Heart right ventricle (tissue), 16 donors: ENCODE measurements at regions of chr1 and their contacts with region 1.

Region 1: DNA sequence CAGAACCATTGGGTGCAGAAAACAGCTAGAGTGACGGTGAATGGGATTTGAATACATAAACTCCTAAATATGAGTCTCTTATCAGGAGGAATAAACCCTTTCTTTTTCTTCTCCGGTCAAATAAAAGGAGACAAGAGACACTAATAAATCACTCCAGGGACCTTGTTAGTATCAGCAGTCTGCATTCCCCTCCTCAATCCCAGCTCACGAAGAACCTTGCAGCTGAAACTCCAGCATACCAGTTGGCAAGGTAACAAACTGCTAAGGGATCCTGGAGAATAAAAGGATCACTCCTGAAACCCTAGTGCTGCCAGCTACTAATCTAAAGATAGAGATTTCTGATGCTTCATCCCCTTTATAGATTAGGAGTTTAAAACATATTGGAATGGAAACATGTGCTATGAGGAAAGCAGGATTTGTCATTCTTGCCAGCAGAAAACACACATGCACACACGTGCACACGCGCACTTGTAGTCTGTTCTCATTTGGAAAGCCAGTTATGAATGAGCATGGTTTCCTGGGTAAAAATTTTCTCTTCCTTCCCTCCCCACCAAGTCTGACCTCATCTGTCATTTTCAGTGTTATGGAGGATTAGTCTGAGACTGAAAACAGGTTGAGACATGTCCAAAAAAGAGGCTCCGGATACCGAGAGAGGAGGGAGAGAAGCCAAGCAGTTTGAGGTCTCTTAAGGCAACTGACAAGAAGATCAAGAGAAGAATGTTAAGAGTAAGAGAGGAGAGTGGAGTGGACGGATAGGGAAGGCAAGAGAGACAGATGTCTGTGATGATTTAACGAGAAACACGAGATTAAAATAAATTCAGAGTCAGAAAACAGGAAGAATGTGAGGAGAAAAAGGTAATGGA is 10.9 kb downstream of the IER5 start:
- DNase-seq: no peak
- ATAC-seq: no peak
- H3K4me3 ChIP-seq: no peak overlapping the region
- H3K27ac ChIP-seq: peak overlapping the region in 3 of 10 donors; percentile 10 to 31 (median 31)
- H3K4me1 ChIP-seq: peaks cover 3 to 89% (median 65%) of the 10 kb centered on the region in 9 donors
- H3K27me3 ChIP-seq: no peaks in the 10 kb centered on the region
- CTCF ChIP-seq: no peak

Region 2: DNA sequence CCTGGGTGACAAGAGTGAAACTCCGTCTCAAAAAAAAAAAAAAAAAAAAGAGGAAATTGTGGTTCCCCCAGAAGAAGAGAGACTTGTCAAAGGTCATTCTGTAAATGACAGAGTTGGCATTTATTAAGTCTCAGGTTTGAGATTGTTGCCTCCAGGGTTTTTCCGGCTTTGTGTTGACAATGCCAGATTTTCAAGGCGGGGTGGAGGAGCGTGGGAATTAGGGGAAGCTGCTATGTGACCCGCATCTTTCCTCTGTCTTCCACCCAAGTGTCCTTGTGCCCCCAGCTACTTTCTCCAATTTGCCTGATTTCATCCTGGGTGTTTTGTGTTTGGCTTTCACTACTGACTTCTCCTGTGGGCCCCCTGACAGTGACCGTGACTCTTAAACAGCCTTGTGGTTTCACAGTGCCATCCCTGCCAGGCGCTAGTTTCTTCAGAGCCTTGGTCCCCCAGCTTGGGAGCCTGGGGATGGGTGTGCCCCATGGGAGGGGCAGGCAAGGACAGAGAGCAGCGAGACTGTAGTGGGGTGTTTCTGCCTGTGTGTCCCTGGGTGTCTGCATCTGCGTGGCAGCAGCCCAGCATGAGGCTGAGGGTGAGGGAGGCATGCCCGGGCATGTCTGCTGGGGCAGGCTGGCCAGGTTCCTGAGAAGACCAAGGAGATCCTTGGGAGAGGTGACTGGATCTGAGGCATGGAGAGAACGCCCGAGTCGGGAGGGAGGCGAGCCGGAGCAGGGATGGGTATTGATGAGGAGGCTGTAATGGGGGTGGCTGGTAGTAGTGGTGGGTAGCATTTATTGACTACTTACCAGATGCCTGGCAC is 35.4 kb after region 1 on chr1:
- intact Hi-C with region 1: loop called in 1 of 10 experiments (anchors 5 kb)
- DNase-seq: peak in 1 of 2 donors; percentile 26
- ATAC-seq: peak in 7 of 8 donors; percentile 15 to 50 (median 25)
- H3K4me3 ChIP-seq: peak overlapping the region in 1 of 10 donors; percentile 16
- H3K27ac ChIP-seq: peak overlapping the region in 8 of 10 donors; percentile 9 to 87 (median 42)
- H3K4me1 ChIP-seq: peaks cover 20 to 66% (median 42%) of the 10 kb centered on the region in 9 donors
- H3K27me3 ChIP-seq: no peaks in the 10 kb centered on the region
- CTCF ChIP-seq: no peak

Region 3: DNA sequence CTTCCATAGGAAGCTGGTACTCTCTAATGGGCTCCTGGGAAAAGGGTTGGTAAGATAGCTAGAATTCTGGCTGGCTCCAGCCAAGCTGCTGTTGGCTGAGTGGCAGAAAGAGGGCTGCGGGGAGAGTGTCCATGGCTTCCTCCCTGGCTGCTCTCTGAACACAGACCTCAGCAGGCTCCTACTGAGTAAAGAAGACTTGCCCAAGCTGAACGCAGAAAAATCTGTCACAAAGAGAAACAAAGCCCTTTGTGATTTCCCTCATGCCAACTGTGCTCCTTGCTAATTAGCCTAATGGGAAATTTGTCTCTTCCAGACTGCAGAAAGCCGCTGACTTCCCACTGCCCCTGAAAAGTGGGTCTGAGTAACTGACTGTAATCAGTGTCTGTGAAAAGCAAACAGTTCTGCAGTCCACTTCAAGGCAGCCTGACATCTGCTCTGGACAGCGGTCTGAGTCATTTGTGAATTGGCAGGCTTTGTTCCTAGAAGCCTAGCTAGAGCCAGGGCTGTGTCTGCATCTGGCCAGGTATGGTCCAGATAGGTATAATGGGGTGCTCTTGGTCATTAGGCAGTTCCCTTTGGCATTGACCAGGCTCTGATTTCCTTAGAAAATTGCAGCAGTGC is 679.4 kb after region 1 on chr1:
- intact Hi-C with region 1: no loop called
- DNase-seq: no peak
- ATAC-seq: peak in 1 of 8 donors; percentile 63
- H3K4me3 ChIP-seq: no peak overlapping the region
- H3K27ac ChIP-seq: no peak overlapping the region
- H3K4me1 ChIP-seq: peaks cover 0 to under 1% (median 0%) of the 10 kb centered on the region in 9 donors
- H3K27me3 ChIP-seq: peaks cover 0 to 26% (median 15%) of the 10 kb centered on the region in 7 donors
- CTCF ChIP-seq: no peak

Region 4: GRCh38 chr1:181910905-181911304 is 811.5 kb after region 1 on chr1:
- intact Hi-C with region 1: no loop called
- DNase-seq: no peak
- ATAC-seq: no peak
- H3K4me3 ChIP-seq: no peak overlapping the region
- H3K27ac ChIP-seq: no peak overlapping the region
- H3K4me1 ChIP-seq: no peaks in the 10 kb centered on the region
- H3K27me3 ChIP-seq: peaks cover 0 to 19% (median 6%) of the 10 kb centered on the region in 7 donors
- CTCF ChIP-seq: peak in 4 of 9 donors; percentile 5 to 24 (median 13)